Activated CD8-positive, alpha-beta memory T cell treated with anti-CD3 and anti-CD28 coated beads, Interleukin-2, amount 10 ng/mL, durations not matched to agents 7 days and 5 days (primary cell): ENCODE measurements at regions of chr2 and their contacts with region 1.

Region 1: GRCh38 chr2:161992526-161992925 is 81.5 kb downstream of the DPP4 start:
- DNase-seq: peak; percentile 82
- ATAC-seq: peak; percentile 84
- H3K4me3 Mint-ChIP-seq: peak overlapping the region; percentile 71
- H3K27ac Mint-ChIP-seq: peak overlapping the region; percentile 98
- H3K4me1 Mint-ChIP-seq: peaks cover 70% of the 10 kb centered on the region
- H3K27me3 Mint-ChIP-seq: no peaks in the 10 kb centered on the region

Region 2: DNA sequence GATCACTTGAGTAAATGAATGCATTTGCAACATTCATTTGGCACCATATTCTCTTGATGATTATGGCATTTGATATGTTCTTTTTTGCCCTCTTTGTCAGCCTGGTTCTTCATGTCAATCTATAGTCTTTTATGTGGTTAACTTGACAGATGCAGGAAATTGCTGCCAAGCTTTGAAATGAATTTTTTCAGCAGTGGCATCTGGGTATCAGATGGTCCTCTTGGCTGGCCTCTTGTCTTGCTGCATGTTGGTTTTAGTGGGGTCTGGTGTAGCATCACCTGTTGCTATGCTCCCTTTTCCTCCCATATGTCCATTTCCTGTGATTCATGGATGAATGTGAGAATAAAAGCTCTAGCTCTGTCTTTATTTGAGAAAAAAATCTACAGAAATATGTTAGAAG is 38.4 kb before region 1 on chr2:
- CTCF ChIA-PET with region 1: interaction called, 15 read pairs
- DNase-seq: no peak
- ATAC-seq: no peak
- H3K4me3 Mint-ChIP-seq: no peak overlapping the region
- H3K27ac Mint-ChIP-seq: peak overlapping the region; percentile 92
- H3K4me1 Mint-ChIP-seq: peaks cover 75% of the 10 kb centered on the region
- H3K27me3 Mint-ChIP-seq: no peaks in the 10 kb centered on the region

Region 3: GRCh38 chr2:161979490-161979889 is 13.0 kb before region 1 on chr2:
- CTCF ChIA-PET with region 1: interaction called, 18 read pairs
- DNase-seq: no peak
- ATAC-seq: peak; percentile 49
- H3K4me3 Mint-ChIP-seq: peak overlapping the region; percentile 63
- H3K27ac Mint-ChIP-seq: peak overlapping the region; percentile 76
- H3K4me1 Mint-ChIP-seq: peaks cover 66% of the 10 kb centered on the region
- H3K27me3 Mint-ChIP-seq: no peaks in the 10 kb centered on the region

Region 4: DNA sequence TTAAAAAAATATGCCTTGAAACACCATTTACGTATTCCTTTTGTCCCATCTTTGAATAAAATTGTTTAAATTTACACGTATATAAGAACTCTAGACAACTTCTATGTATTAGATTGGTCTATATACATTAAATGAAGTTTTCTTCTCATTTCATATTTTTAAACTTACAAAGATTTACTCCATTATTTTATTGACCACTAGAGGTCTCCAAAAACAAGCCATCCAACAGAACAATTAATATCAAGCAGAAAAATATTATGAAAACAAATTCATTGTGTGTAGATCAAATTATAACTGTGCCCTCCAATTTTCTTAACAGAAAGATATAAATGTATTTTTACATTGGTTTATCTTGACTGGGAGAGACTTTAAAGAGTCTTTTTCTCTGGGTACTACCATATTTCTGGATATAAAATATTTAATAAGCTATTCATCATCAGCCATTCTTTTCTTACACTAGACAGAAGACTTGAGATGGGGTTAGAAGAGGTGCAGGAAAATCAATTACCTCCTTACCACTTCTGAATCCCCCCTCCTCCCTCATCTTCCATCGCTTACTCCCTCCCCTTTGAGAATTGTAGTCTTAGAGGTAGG is 15.0 kb after region 1 on chr2:
- CTCF ChIA-PET with region 1: interaction called, 14 read pairs
- DNase-seq: no peak
- ATAC-seq: no peak
- H3K4me3 Mint-ChIP-seq: no peak overlapping the region
- H3K27ac Mint-ChIP-seq: no peak overlapping the region
- H3K4me1 Mint-ChIP-seq: peaks cover 52% of the 10 kb centered on the region
- H3K27me3 Mint-ChIP-seq: no peaks in the 10 kb centered on the region

Region 5: DNA sequence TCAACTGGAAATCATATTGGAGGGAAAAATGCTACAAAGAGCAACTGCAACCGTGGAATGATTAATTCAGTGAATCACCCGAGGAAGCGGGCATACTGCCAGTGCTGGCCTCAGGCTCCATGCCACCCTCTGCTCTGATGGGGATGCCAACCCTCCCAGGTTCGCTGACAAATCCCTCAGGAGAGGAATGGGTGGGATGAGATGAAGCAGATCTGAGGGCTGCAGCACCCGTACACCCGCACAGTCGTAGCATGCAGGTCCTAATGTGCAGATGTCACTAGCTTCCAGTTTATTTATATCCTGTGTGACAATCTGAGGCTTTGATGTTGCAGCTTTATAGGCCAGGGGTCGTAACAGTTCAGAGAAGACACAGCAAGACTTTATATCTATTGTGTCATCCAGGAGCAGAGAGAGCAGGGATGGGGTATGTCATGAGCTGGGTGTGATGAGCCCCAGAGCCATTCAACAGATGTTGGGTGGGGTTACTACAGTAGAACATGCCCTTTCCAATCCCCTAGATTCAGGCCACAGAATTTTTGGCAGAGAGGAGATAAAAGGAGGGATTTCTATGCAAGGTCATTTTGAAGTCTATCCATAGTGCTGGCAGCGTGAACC is 36.9 kb after region 1 on chr2:
- CTCF ChIA-PET with region 1: no interaction called
- DNase-seq: no peak
- ATAC-seq: no peak
- H3K4me3 Mint-ChIP-seq: no peak overlapping the region
- H3K27ac Mint-ChIP-seq: no peak overlapping the region
- H3K4me1 Mint-ChIP-seq: peaks cover 15% of the 10 kb centered on the region
- H3K27me3 Mint-ChIP-seq: no peaks in the 10 kb centered on the region

Region 6: GRCh38 chr2:162073888-162074645 is 81.5 kb after region 1 on chr2 and contains the start of gene DPP4:
- CTCF ChIA-PET with region 1: interaction called, 10 read pairs
- DNase-seq: peak; percentile 69
- ATAC-seq: peak; percentile 84
- H3K4me3 Mint-ChIP-seq: peak within 1 kb of the TSS; percentile 95
- H3K27ac Mint-ChIP-seq: peak within 1 kb of the TSS; percentile 88
- H3K4me1 Mint-ChIP-seq: peaks cover 44% of the 10 kb centered on the region
- H3K27me3 Mint-ChIP-seq: no peaks in the 10 kb centered on the region
- total RNA-seq, gene DPP4: 106 to 115 TPM

Region 7: DNA sequence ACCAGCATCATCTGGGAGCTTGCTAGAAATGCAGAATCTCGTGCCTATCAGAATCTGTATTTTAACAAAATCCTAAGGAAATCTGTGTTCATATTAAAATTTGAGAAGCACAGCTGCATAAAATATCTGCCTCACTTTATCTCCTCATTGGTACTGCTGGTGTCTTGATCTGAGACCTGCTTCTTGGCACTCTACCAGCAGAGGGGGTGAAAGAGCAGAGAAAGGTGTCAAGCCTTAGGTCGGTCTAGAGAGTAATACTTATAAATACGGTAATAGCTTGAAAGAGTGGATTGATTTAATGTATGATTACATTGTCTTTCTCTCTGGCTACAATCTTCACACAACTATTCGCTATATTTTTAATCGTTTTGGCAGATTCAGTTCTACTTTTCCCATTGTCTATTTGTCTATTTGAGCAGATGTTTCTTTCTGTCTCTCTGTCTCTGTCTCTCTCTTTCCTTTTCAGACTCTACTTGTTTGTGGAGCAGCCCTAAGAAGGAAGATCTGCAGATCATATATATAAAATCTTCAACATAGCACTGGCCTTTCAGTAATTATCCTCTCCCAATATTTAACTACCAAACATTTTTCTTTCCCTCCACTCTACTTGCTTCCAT is 161.2 kb after region 1 on chr2:
- CTCF ChIA-PET with region 1: no interaction called
- DNase-seq: peak; percentile 77
- ATAC-seq: peak; percentile 99
- H3K4me3 Mint-ChIP-seq: no peak overlapping the region
- H3K27ac Mint-ChIP-seq: no peak overlapping the region
- H3K4me1 Mint-ChIP-seq: peaks cover 4% of the 10 kb centered on the region
- H3K27me3 Mint-ChIP-seq: peaks cover 56% of the 10 kb centered on the region

Region 8: GRCh38 chr2:162233197-162233596 is 240.7 kb after region 1 on chr2:
- CTCF ChIA-PET with region 1: no interaction called
- DNase-seq: no peak
- ATAC-seq: no peak
- H3K4me3 Mint-ChIP-seq: no peak overlapping the region
- H3K27ac Mint-ChIP-seq: no peak overlapping the region
- H3K4me1 Mint-ChIP-seq: no peaks in the 10 kb centered on the region
- H3K27me3 Mint-ChIP-seq: peaks cover 25% of the 10 kb centered on the region